Aorta (tissue), 5 donors: ENCODE measurements at regions of chr17 and their contacts with region 1.

Region 1: GRCh38 chr17:60577147-60577915 is 22.7 kb upstream of the PPM1D start:
- DNase-seq: peak in 1 of 2 donors; percentile 53
- ATAC-seq: peak; percentile 87
- H3K4me3 ChIP-seq: peak overlapping the region; percentile 72 to 76
- H3K27ac ChIP-seq: no peak overlapping the region
- H3K4me1 ChIP-seq: peaks cover 0 to 3% of the 10 kb centered on the region in 2 donors
- H3K27me3 ChIP-seq: no peaks in the 10 kb centered on the region

Region 2: DNA sequence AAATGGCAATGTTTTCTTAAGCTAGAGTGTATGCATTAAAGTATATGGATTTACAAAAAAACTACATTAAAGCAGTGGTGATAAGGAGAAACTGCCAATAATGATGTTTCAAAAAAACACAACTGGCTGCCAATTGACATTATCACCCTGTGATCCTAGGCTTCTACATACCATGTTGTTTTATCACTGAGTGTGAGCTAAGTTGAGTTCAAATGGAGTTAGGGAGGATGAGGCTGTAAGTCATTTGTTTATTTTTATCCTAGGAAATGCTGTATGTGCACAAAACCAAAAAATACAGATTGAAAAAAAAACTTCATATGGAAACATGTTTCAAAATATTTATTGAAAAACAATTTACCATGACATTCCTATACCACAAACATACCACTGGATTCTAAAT is 132.2 kb before region 1 on chr17:
- intact Hi-C with region 1: no loop called
- DNase-seq: no peak
- ATAC-seq: no peak
- H3K4me3 ChIP-seq: no peak overlapping the region
- H3K27ac ChIP-seq: no peak overlapping the region
- H3K4me1 ChIP-seq: no peaks in the 10 kb centered on the region
- H3K27me3 ChIP-seq: no peaks in the 10 kb centered on the region

Region 3: GRCh38 chr17:60468371-60468770 is 109.0 kb before region 1 on chr17:
- intact Hi-C with region 1: loop called in 1 of 2 experiments (anchors 10 kb)
- DNase-seq: no peak
- ATAC-seq: no peak
- H3K4me3 ChIP-seq: no peak overlapping the region
- H3K27ac ChIP-seq: no peak overlapping the region
- H3K4me1 ChIP-seq: peaks cover 0 to 3% of the 10 kb centered on the region in 2 donors
- H3K27me3 ChIP-seq: no peaks in the 10 kb centered on the region

Region 4: GRCh38 chr17:60506312-60506711 is 71.0 kb before region 1 on chr17:
- intact Hi-C with region 1: no loop called
- DNase-seq: no peak
- ATAC-seq: no peak
- H3K4me3 ChIP-seq: no peak overlapping the region
- H3K27ac ChIP-seq: no peak overlapping the region
- H3K4me1 ChIP-seq: peaks cover 0 to 8% of the 10 kb centered on the region in 2 donors
- H3K27me3 ChIP-seq: no peaks in the 10 kb centered on the region

Region 5: GRCh38 chr17:60525685-60526514 is 51.4 kb before region 1 on chr17 and contains the start of gene APPBP2:
- intact Hi-C with region 1: loop called in 1 of 2 experiments (anchors 5 kb)
- DNase-seq: peak; percentile 91 to 96
- ATAC-seq: peak; percentile 97
- H3K4me3 ChIP-seq: peak within 1 kb of the TSS; percentile 86 to 95
- H3K27ac ChIP-seq: peak within 1 kb of the TSS; percentile 47 to 85
- H3K4me1 ChIP-seq: peaks cover 2 to 3% of the 10 kb centered on the region in 2 donors
- H3K27me3 ChIP-seq: no peaks in the 10 kb centered on the region
- total RNA-seq, gene APPBP2: 40.4 to 49.3 TPM

Region 6: DNA sequence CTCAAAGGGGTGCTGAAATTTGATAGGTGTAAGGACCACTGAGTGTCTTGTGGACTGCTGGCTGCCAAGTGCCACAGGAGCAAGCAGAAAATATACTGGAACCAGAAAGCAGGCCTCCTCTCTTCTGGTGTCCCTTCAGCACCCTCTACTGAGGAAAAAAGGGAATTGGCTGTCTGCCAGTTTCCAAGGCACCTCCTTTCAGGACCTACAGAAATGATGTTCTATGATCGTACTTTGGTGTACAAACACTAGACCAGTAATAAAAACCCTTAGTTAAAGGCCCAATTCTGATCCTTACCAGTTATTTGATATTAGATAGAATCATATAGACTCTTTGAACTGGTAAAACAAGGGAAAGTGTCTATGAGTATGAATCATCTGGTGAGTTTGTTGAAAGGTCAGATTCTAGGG is 64.5 kb after region 1 on chr17:
- intact Hi-C with region 1: loop called (anchors 5 kb)
- DNase-seq: peak; percentile 48 to 52
- ATAC-seq: peak; percentile 75
- H3K4me3 ChIP-seq: no peak overlapping the region
- H3K27ac ChIP-seq: no peak overlapping the region
- H3K4me1 ChIP-seq: no peaks in the 10 kb centered on the region
- H3K27me3 ChIP-seq: no peaks in the 10 kb centered on the region